GM12878 (cell line): ENCODE measurements at regions of chr17 and their contacts with region 1.

Region 1: GRCh38 chr17:2392252-2393173 is 8.3 kb downstream of the MNT start:
- DNase-seq: peak; percentile 60
- ATAC-seq: peak; percentile 68
- H3K4me3 ChIP-seq: peak overlapping the region; percentile 78
- H3K27ac ChIP-seq: peak overlapping the region; percentile 86
- H3K4me1 ChIP-seq: peaks cover 27% of the 10 kb centered on the region
- H3K27me3 ChIP-seq: no peaks in the 10 kb centered on the region
- CTCF ChIP-seq: no peak
- EP300 ChIP-seq: 0 out of 4 replicates have a peak, but pooled peaks of 1 of the 2 experiments have one; percentile 24
- POLR2A ChIP-seq: peak; percentile 79
- RAD21 ChIP-seq: no peak

Region 2: DNA sequence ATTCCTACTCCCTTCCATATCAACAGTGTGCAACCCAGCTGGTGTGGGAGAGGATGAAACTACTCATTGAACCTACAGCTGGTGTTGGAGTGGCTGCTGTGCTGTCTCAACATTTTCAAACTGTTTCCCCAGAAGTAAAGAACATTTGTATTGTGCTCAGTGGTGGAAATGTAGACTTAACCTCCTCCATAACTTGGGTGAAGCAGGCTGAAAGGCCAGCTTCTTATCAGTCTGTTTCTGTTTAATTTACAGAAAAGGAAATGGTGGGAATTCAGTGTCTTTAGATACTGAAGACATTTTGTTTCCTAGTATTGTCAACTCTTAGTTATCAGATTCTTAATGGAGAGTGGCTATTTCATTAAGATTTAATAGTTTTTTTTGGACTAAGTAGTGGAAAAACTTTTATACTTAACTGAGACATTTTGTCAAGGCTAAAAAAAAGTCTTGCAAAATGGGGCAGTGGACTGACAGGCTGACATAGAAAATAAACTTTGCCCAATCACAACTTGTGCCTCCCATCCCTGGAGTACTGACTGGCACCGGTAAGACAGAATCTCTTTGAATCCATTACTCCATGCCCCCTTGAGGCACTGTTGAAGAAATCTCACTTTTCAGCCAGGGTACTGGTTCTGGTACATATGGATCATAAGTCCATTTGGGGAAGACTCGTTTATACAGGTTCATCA is 68.7 kb before region 1 on chr17:
- CTCF ChIA-PET with region 1: no interaction called
- POLR2A ChIA-PET with region 1: no interaction called
- RAD21 ChIA-PET with region 1: no interaction called
- SMC1A ChIA-PET with region 1: no interaction called
- in situ Hi-C with region 1: no loop called
- intact Hi-C with region 1: no loop called
- DNase-seq: no peak
- ATAC-seq: no peak
- H3K4me3 ChIP-seq: no peak overlapping the region
- H3K27ac ChIP-seq: no peak overlapping the region
- H3K4me1 ChIP-seq: no peaks in the 10 kb centered on the region
- H3K27me3 ChIP-seq: no peaks in the 10 kb centered on the region
- CTCF ChIP-seq: no peak
- EP300 ChIP-seq: no peak
- POLR2A ChIP-seq: no peak
- RAD21 ChIP-seq: no peak

Region 3: DNA sequence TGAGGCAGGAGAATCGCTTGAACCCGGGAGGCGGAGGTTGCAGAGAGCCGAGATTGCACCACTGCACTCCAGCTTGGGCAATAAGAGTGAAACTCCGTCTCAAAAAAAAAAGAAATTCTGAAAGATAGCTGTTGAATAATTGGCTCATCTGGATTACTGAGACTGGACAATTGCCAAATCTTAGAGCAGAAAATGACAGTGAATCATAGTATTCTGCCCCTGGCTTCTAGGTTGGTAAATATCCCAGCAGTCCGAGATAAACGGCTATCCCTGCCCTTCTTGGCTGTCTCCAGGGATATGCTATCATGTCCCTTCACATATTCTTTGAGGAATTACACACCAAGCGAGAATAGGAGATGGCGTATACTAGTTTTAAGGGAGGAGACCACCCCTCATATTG is 154.7 kb after region 1 on chr17:
- CTCF ChIA-PET with region 1: no interaction called
- POLR2A ChIA-PET with region 1: no interaction called
- RAD21 ChIA-PET with region 1: no interaction called
- SMC1A ChIA-PET with region 1: no interaction called
- in situ Hi-C with region 1: no loop called
- intact Hi-C with region 1: no loop called
- DNase-seq: no peak
- ATAC-seq: no peak
- H3K4me3 ChIP-seq: no peak overlapping the region
- H3K27ac ChIP-seq: no peak overlapping the region
- H3K4me1 ChIP-seq: peaks cover 6% of the 10 kb centered on the region
- H3K27me3 ChIP-seq: no peaks in the 10 kb centered on the region
- CTCF ChIP-seq: no peak
- EP300 ChIP-seq: no peak
- POLR2A ChIP-seq: no peak
- RAD21 ChIP-seq: no peak

Region 4: GRCh38 chr17:2711601-2712299 is 319.2 kb after region 1 on chr17 and contains the start of gene CLUH:
- CTCF ChIA-PET with region 1: no interaction called
- POLR2A ChIA-PET with region 1: no interaction called
- RAD21 ChIA-PET with region 1: no interaction called
- SMC1A ChIA-PET with region 1: no interaction called
- in situ Hi-C with region 1: no loop called
- intact Hi-C with region 1: loop called (anchors 2 kb)
- DNase-seq: peak; percentile 83
- ATAC-seq: peak; percentile 88
- H3K4me3 ChIP-seq: peak within 1 kb of the TSS; percentile 95
- H3K27ac ChIP-seq: peak within 1 kb of the TSS; percentile 79
- H3K4me1 ChIP-seq: peaks cover 20% of the 10 kb centered on the region
- H3K27me3 ChIP-seq: no peaks in the 10 kb centered on the region
- CTCF ChIP-seq: no peak
- EP300 ChIP-seq: 0 out of 4 replicates have a peak, but pooled peaks have one; percentile 32 to 52
- POLR2A ChIP-seq: peak; percentile 87
- RAD21 ChIP-seq: no peak
- polyA plus RNA-seq, gene CLUH: 0.11 to 0.82 TPM